Posterior vena cava (tissue), 2 donors: ENCODE measurements at regions of chr10 and their contacts with region 1.

Region 1: GRCh38 chr10:101067356-101068083 is 5.7 kb downstream of the KAZALD1 start:
- DNase-seq: no peak

Region 2: GRCh38 chr10:101041252-101041761 is 26.2 kb before region 1 on chr10:
- intact Hi-C with region 1: loop called in 1 of 2 experiments (anchors 1 kb)
- DNase-seq: peak; percentile 91